A549 (cell line): ENCODE measurements at regions of chr2 and their contacts with region 1.

Region 1: GRCh38 chr2:29196792-29197788 is 81.9 kb downstream of the CLIP4 start:
- DNase-seq: peak; percentile 79 to 81
- ATAC-seq: peak; percentile 89 to 96
- H3K4me3 ChIP-seq: no peak overlapping the region
- H3K27ac ChIP-seq: no peak overlapping the region
- H3K4me1 ChIP-seq: peaks cover 3% of the 10 kb centered on the region; the same call in 1 of the 3 replicates
- CTCF ChIP-seq: peak; percentile 92
- EP300 ChIP-seq: no peak
- POLR2A ChIP-seq: no peak
- RAD21 ChIP-seq: peak; percentile 98 to 99

Region 2: GRCh38 chr2:29053670-29054400 is 143.3 kb before region 1 on chr2:
- CTCF ChIA-PET with region 1: interaction called, 11 read pairs
- POLR2A ChIA-PET with region 1: no interaction called
- DNase-seq: peak in 1 of 2 experiments; percentile 21
- ATAC-seq: peak; percentile 48 to 62; a peak in 4 of 6 replicates
- H3K4me3 ChIP-seq: no peak overlapping the region
- H3K27ac ChIP-seq: no peak overlapping the region
- H3K4me1 ChIP-seq: no peaks in the 10 kb centered on the region
- CTCF ChIP-seq: peak; percentile 32; the same call in 1 of the 3 replicates
- EP300 ChIP-seq: no peak
- POLR2A ChIP-seq: no peak
- RAD21 ChIP-seq: peak; percentile 60 to 61

Region 3: DNA sequence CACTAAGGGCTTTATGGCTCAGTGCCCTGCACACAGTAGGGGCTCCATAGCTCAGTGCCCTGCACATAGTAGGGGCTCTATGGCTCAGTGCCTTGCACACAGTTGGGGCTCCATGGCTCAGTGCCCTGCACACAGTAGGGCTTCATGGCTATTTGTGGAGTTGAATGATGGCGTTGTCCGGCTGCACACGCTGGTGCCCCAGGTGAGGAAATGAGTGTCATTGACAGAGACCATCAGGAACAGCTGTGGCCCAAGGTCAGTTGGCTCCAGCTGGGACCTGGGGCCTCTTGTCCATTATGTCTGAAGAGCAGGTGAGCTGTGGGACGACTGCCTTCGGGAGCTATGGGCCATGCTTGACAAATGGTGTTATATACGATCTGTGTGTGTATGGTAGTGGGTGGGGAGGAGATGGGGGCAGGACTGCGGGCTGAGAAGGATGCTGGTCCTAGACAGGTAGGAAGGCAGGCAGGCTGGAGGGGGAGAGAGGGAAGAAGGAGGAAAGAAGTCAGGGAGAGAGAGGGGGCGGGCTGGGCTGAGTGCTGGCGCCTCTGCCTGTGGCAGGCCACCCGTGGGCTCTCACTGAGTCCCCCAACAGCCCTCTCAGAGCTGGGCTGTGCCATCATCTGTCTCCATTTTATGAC is 48.8 kb after region 1 on chr2:
- CTCF ChIA-PET with region 1: no interaction called
- POLR2A ChIA-PET with region 1: no interaction called
- DNase-seq: peak in 1 of 2 experiments; percentile 22
- ATAC-seq: peak; percentile 38 to 56; a peak in 5 of 6 replicates
- H3K4me3 ChIP-seq: no peak overlapping the region
- H3K27ac ChIP-seq: no peak overlapping the region
- H3K4me1 ChIP-seq: no peaks in the 10 kb centered on the region
- CTCF ChIP-seq: no peak
- EP300 ChIP-seq: no peak
- POLR2A ChIP-seq: no peak
- RAD21 ChIP-seq: no peak